Esophagus squamous epithelium (tissue), 5 donors: ENCODE measurements at regions of chr17 and their contacts with region 1.

Region 1: DNA sequence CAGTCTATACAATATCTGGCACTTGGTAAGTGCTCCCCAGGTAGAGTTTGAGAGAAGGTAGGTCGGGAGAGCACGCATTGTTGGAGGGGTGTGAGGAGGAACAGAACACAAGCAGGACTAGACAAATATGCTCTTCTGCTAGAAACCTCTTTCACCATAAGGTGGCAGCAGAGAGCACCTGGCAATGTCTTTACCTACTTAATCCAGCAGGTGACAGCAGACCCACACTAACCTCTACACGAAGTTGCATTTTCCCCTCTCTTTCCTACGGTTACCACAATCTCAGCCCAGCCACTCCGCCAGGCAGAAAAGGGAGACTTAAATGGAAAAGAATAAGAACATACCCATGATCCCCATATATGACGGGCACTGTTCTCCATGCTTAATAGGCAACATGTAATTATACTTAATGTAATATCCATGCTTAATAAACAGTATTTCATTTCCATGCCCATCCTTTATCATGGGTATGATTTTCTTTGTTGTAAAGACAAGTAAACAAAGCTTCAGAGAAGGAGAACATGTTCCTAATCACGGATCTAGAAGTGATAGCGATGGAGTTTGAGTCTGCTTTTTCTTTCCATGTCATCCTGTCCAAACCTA is 55.1 kb upstream of the CCL2 start:
- DNase-seq: peak; percentile 44
- H3K4me3 ChIP-seq: no peak overlapping the region
- H3K27ac ChIP-seq: no peak overlapping the region
- H3K4me1 ChIP-seq: peaks cover 0 to 38% (median 3%) of the 10 kb centered on the region in 3 donors
- H3K27me3 ChIP-seq: peaks cover 0 to 42% (median 0%) of the 10 kb centered on the region in 4 donors
- CTCF ChIP-seq: peak; percentile 97 to 100 (median 100)
- POLR2A ChIP-seq: no peak

Region 2: GRCh38 chr17:34110315-34110714 is 89.7 kb before region 1 on chr17:
- intact Hi-C with region 1: no loop called
- DNase-seq: no peak
- H3K4me3 ChIP-seq: no peak overlapping the region
- H3K27ac ChIP-seq: no peak overlapping the region
- H3K4me1 ChIP-seq: peaks cover 0 to 11% (median 6%) of the 10 kb centered on the region in 3 donors
- H3K27me3 ChIP-seq: peaks cover 0 to 36% (median 0%) of the 10 kb centered on the region in 4 donors
- CTCF ChIP-seq: no peak
- POLR2A ChIP-seq: no peak

Region 3: DNA sequence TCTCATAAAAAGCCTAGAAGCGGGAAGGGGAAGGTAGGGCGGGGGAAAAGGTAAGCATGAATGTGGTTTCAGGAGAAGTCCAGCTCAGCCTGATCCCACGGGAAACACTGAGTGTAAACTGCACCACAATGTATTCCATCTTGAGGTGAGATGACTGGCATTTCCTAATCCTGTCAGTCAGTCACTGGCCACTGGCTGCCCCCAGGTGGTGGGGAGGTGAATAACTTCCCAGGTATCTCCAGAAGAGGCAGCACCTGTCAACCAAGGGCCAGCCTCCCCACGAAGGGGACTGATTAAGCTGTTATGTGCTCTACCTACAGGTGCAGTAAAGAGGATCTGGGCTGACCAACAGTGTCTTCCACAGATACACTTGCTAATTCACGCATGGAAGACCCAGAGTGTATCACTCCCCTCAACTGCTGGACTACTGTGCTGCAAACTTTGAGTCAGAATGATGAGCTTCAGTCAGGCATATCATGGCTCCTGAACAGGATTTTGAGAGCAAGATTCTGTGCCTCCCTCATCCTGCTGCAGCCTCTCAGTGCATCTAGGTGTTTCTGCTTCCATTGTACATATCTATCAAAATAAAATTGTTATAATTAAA is 53.5 kb before region 1 on chr17:
- intact Hi-C with region 1: no loop called
- DNase-seq: no peak
- H3K4me3 ChIP-seq: no peak overlapping the region
- H3K27ac ChIP-seq: no peak overlapping the region
- H3K4me1 ChIP-seq: no peaks in the 10 kb centered on the region
- H3K27me3 ChIP-seq: peaks cover 0 to 38% (median 0%) of the 10 kb centered on the region in 4 donors
- CTCF ChIP-seq: peak; percentile 24 to 91 (median 80)
- POLR2A ChIP-seq: no peak

Region 4: GRCh38 chr17:34156741-34157589 is 43.1 kb before region 1 on chr17:
- intact Hi-C with region 1: no loop called
- DNase-seq: no peak
- H3K4me3 ChIP-seq: peak overlapping the region in 2 of 4 donors; percentile 1 to 43
- H3K27ac ChIP-seq: no peak overlapping the region
- H3K4me1 ChIP-seq: peaks cover 0 to 11% (median 3%) of the 10 kb centered on the region in 3 donors
- H3K27me3 ChIP-seq: peaks cover 0 to 81% (median 18%) of the 10 kb centered on the region in 4 donors
- CTCF ChIP-seq: no peak
- POLR2A ChIP-seq: no peak

Region 5: GRCh38 chr17:34306466-34306865 is 106.4 kb after region 1 on chr17:
- intact Hi-C with region 1: loop called (anchors 5 kb)
- DNase-seq: no peak
- H3K4me3 ChIP-seq: no peak overlapping the region
- H3K27ac ChIP-seq: peak overlapping the region in 1 of 4 donors; percentile 42
- H3K4me1 ChIP-seq: peaks cover 0 to 19% (median 12%) of the 10 kb centered on the region in 3 donors
- H3K27me3 ChIP-seq: peaks cover 0 to 10% (median 0%) of the 10 kb centered on the region in 4 donors
- CTCF ChIP-seq: peak in 5 of 6 experiments; percentile 16 to 58 (median 30)
- POLR2A ChIP-seq: no peak

Region 6: DNA sequence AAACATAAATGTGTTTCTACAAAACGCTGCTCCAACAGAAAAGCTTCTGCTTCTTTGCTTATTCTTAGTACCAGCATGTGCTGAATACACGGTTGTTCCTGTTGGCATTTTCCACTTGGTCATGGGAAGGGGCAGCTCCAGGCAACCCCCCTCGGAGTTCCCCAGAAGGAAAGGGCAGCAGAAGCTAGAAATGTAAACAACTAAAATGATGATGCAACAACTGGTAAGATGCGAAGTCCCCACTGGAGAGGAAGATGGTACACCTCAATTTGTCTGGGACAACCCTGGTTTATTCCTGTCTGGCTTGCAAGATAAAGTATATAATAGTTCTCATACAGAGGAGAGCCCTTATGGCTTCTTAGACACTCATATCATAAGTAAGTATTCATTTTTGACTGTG is 147.0 kb after region 1 on chr17:
- intact Hi-C with region 1: loop called (anchors 5 kb)
- DNase-seq: no peak
- H3K4me3 ChIP-seq: no peak overlapping the region
- H3K27ac ChIP-seq: no peak overlapping the region
- H3K4me1 ChIP-seq: peaks cover 0 to 4% (median 0%) of the 10 kb centered on the region in 3 donors
- H3K27me3 ChIP-seq: no peaks in the 10 kb centered on the region
- CTCF ChIP-seq: no peak
- POLR2A ChIP-seq: no peak

Region 7: GRCh38 chr17:34361478-34362061 is 161.5 kb after region 1 on chr17:
- intact Hi-C with region 1: loop called (anchors 2 kb)
- DNase-seq: peak; percentile 39
- H3K4me3 ChIP-seq: no peak overlapping the region
- H3K27ac ChIP-seq: no peak overlapping the region
- H3K4me1 ChIP-seq: peaks cover 0 to 3% (median 0%) of the 10 kb centered on the region in 3 donors
- H3K27me3 ChIP-seq: peaks cover 0 to 46% (median 0%) of the 10 kb centered on the region in 4 donors
- CTCF ChIP-seq: peak; percentile 91 to 100 (median 99)
- POLR2A ChIP-seq: no peak

Region 8: GRCh38 chr17:34465789-34466188 is 265.8 kb after region 1 on chr17:
- intact Hi-C with region 1: no loop called
- DNase-seq: no peak
- H3K4me3 ChIP-seq: no peak overlapping the region
- H3K27ac ChIP-seq: no peak overlapping the region
- H3K4me1 ChIP-seq: no peaks in the 10 kb centered on the region
- H3K27me3 ChIP-seq: peaks cover 0 to 71% (median 0%) of the 10 kb centered on the region in 4 donors
- CTCF ChIP-seq: no peak
- POLR2A ChIP-seq: no peak